Activated CD4-positive, alpha-beta memory T cell treated with anti-CD3 and anti-CD28 coated beads for 36 hours (primary cell): ENCODE measurements at regions of chr7 and their contacts with region 1.

Region 1: DNA sequence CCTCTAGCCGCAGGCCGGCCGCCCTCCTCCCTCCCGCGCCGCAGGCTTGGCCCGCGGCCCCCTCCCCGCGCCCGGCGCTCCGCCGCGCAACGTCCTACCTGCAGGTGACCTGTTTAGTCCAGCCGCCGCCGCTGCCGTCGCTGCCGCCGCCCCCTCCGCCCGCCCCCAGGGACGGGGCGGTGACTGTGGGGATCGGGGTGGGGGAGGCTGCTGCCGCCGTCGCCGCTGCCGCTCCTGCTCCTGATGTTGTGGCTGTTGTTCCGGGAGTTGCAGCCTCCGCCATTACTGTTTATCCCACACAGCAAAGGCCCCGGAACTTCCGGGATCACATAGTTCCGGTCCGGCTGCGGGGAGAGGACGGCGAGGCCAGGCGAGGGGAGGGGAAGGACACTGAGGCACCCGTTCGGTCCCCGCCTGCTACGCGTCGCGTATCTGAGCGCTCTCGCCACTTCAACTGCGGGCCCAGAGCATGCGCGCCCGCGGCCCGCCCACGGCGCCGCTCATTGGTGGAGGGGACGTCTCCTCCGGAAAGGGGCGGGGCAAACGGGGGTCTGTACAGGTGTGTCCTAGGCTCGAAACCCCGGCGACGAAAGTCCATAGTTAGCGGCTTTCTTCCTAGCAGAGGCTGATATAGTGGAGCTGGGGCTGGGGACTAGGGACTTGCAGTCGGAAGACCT is at the start of gene MKRN1:
- DNase-seq: peak; percentile 96
- H3K4me3 Mint-ChIP-seq: peak within 1 kb of the TSS; percentile 97
- H3K27ac Mint-ChIP-seq: peak within 1 kb of the TSS; percentile 96
- H3K4me1 Mint-ChIP-seq: peaks cover 27% of the 10 kb centered on the region
- H3K27me3 Mint-ChIP-seq: no peaks in the 10 kb centered on the region
- total RNA-seq, gene MKRN1: 104 to 106 TPM

Region 2: GRCh38 chr7:140209866-140210609 is 269.2 kb before region 1 on chr7:
- CTCF ChIA-PET with region 1: no interaction called
- POLR2A ChIA-PET with region 1: no interaction called
- intact Hi-C with region 1: loop called (anchors 5 kb)
- DNase-seq: peak; percentile 87
- H3K4me3 Mint-ChIP-seq: peak overlapping the region; percentile 38
- H3K27ac Mint-ChIP-seq: peak overlapping the region; percentile 86
- H3K4me1 Mint-ChIP-seq: peaks cover 86% of the 10 kb centered on the region
- H3K27me3 Mint-ChIP-seq: no peaks in the 10 kb centered on the region

Region 3: GRCh38 chr7:140375892-140376730 is 103.1 kb before region 1 on chr7:
- CTCF ChIA-PET with region 1: interaction called, 4 read pairs
- POLR2A ChIA-PET with region 1: interaction called, 13 read pairs
- intact Hi-C with region 1: loop called (anchors 1 kb)
- DNase-seq: peak; percentile 61
- H3K4me3 Mint-ChIP-seq: peak overlapping the region; percentile 62
- H3K27ac Mint-ChIP-seq: peak overlapping the region; percentile 99
- H3K4me1 Mint-ChIP-seq: peaks cover 51% of the 10 kb centered on the region
- H3K27me3 Mint-ChIP-seq: no peaks in the 10 kb centered on the region

Region 4: DNA sequence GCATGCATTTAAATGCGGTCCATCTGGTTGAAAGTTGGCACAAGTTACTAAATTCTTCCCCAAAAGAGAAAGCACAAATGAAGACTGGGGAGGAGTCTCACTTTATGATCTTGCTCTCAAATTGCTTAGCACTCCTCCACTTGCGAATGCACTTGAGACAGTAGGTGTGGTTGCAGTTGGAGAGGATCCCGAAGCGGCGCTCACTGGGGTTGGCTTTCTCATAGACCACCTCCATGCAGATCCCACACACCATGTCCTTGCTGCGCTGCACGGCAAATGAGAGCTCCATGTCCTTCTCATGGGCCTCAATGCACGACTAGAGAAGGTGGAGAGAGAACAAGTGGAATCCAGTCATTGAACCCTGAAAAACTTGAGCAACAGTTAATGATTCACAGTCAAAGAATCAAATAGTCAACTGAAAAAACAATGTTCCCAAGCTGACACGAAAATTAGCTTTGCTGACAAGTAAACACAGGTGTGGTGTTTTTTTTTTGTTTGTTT is 22.6 kb before region 1 on chr7:
- CTCF ChIA-PET with region 1: interaction called, 3 read pairs
- POLR2A ChIA-PET with region 1: interaction called, 7 read pairs
- intact Hi-C with region 1: loop called (anchors 2 kb)
- DNase-seq: no peak
- H3K4me3 Mint-ChIP-seq: no peak overlapping the region
- H3K27ac Mint-ChIP-seq: peak overlapping the region; percentile 40
- H3K4me1 Mint-ChIP-seq: peaks cover 51% of the 10 kb centered on the region
- H3K27me3 Mint-ChIP-seq: no peaks in the 10 kb centered on the region

Region 5: GRCh38 chr7:140653319-140654108 is 174.3 kb after region 1 on chr7:
- CTCF ChIA-PET with region 1: interaction called, 23 read pairs
- POLR2A ChIA-PET with region 1: no interaction called
- intact Hi-C with region 1: loop called (anchors 2 kb)
- DNase-seq: no peak
- H3K4me3 Mint-ChIP-seq: no peak overlapping the region
- H3K27ac Mint-ChIP-seq: no peak overlapping the region
- H3K4me1 Mint-ChIP-seq: peaks cover 17% of the 10 kb centered on the region
- H3K27me3 Mint-ChIP-seq: peaks cover 5% of the 10 kb centered on the region

Region 6: DNA sequence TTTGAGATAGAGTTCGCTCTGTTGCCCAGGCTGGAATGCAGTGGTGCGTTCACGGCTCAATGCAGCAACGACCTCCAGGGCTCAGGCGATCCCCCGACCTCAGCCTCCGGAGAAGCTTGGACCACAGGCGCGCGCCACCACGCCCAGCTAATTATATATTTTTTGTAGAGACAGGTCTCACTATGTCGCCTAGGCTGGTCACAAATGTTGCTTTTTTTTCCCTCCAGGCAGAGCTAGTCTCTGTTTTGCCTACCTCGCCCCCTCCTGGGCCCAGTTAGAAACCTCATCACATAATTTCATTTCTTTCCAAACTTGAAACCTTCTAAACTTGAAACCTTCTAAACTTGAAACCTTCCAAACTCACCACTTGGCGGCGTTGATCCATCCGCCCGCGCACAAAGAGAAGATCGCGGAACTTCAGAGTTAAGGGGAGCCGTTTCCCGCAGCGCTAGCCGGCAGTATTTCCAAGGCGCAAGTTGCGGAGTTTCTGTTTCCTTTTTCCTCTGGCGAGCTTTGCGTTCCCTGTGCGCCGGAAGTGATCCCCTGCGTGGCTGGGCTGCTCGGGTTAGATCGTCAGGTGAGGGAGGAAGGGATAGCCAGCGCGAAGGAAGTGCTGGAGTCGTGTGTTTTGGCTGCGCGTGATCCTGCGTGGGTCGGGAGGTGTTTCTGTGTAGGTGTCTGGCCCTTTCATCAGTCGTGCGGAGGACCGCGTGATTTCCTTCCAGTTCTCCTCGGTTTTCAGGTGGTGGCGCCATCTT is 1258.8 kb after region 1 on chr7 and contains the start of gene SSBP1:
- CTCF ChIA-PET with region 1: no interaction called
- POLR2A ChIA-PET with region 1: no interaction called
- intact Hi-C with region 1: loop called (anchors 1 kb)
- DNase-seq: peak; percentile 96
- H3K4me3 Mint-ChIP-seq: peak within 1 kb of the TSS; percentile 99
- H3K27ac Mint-ChIP-seq: peak within 1 kb of the TSS; percentile 99
- H3K4me1 Mint-ChIP-seq: peaks cover 35% of the 10 kb centered on the region
- H3K27me3 Mint-ChIP-seq: no peaks in the 10 kb centered on the region
- total RNA-seq, gene SSBP1: 207 to 234 TPM